ENCODE measurements at regions of chr1 and their contacts with region 1.

Region 1: GRCh38 chr1:153749408-153750005 is 21.7 kb downstream of the INTS3 start:
- DNase-seq: peak; percentile 48
- ATAC-seq: peak; percentile 100
- H3K4me3 ChIP-seq: no peak overlapping the region
- H3K27ac ChIP-seq: no peak overlapping the region
- H3K4me1 ChIP-seq: no peaks in the 10 kb centered on the region; the same call in 1 of the 2 replicates
- H3K27me3 ChIP-seq: no peaks in the 10 kb centered on the region
- CTCF ChIP-seq: peak; percentile 97 to 99 (median 99); a peak in 5 of 6 replicates
- EP300 ChIP-seq: no peak
- POLR2A ChIP-seq: no peak
- RAD21 ChIP-seq: peak; percentile 82

Region 2: GRCh38 chr1:153727463-153728304 is 21.8 kb before region 1 on chr1 and contains the start of gene INTS3:
- CTCF ChIA-PET with region 1: interaction called, 63 read pairs
- POLR2A ChIA-PET with region 1: interaction called, 184 read pairs
- RAD21 ChIA-PET with region 1: interaction called, 139 read pairs
- SMC1A ChIA-PET with region 1: interaction called, 144 read pairs
- in situ Hi-C with region 1: no loop called
- intact Hi-C with region 1: loop called (anchors 2 kb)
- DNase-seq: peak; percentile 100
- ATAC-seq: peak; percentile 92
- H3K4me3 ChIP-seq: peak within 1 kb of the TSS; percentile 100
- H3K27ac ChIP-seq: peak within 1 kb of the TSS; percentile 100
- H3K4me1 ChIP-seq: peaks cover 12% of the 10 kb centered on the region
- H3K27me3 ChIP-seq: no peaks in the 10 kb centered on the region
- CTCF ChIP-seq: peak in 2 of 3 experiments; percentile 10 to 19; a peak in 2 of 6 replicates
- EP300 ChIP-seq: no peak
- POLR2A ChIP-seq: peak; percentile 92
- RAD21 ChIP-seq: no peak
- polyA plus RNA-seq, gene INTS3: 12.6 to 14.0 TPM

Region 3: GRCh38 chr1:153734396-153735089 is 15.0 kb before region 1 on chr1:
- CTCF ChIA-PET with region 1: interaction called, 63 read pairs
- POLR2A ChIA-PET with region 1: interaction called, 184 read pairs
- RAD21 ChIA-PET with region 1: interaction called, 139 read pairs
- SMC1A ChIA-PET with region 1: interaction called, 144 read pairs
- in situ Hi-C with region 1: no loop called
- intact Hi-C with region 1: loop called (anchors 2 kb)
- DNase-seq: no peak
- ATAC-seq: peak; percentile 43
- H3K4me3 ChIP-seq: no peak overlapping the region
- H3K27ac ChIP-seq: peak overlapping the region; percentile 82
- H3K4me1 ChIP-seq: peaks cover 33% of the 10 kb centered on the region
- H3K27me3 ChIP-seq: no peaks in the 10 kb centered on the region
- CTCF ChIP-seq: no peak
- EP300 ChIP-seq: no peak
- POLR2A ChIP-seq: no peak
- RAD21 ChIP-seq: no peak